ENCODE measurements at regions of chr2 and their contacts with region 1.

Region 1: DNA sequence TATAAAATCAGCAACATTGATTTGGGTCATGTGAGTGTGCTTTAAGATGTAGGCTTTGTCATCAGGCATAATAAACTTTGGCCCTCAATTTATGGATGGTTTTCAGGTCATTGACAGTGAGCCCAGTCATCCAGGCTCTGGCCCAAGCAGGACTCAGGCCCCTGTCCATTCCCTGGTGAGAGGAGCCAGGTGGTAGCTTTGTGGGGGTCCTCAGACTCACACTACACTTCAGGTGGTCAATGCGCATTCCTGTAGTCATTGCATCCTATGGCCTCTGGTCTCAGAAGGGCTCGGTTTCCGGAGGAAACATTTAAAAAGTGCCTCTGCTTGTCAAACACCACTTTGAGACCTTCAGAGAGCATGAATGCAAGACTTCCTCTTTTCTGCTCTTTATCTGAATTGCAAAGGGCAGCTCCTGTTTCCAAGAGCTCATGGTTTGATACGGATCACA is 20.2 kb downstream of the LGALSL start:
- DNase-seq: no peak
- H3K4me3 ChIP-seq: no peak overlapping the region
- CTCF ChIP-seq: no peak
- POLR2A ChIP-seq: no peak

Region 2: GRCh38 chr2:64506686-64507085 is 32.5 kb after region 1 on chr2:
- intact Hi-C with region 1: loop called (anchors 1 kb)
- DNase-seq: no peak
- H3K4me3 ChIP-seq: no peak overlapping the region
- CTCF ChIP-seq: no peak
- POLR2A ChIP-seq: no peak

Measured in lower leg skin (tissue), 4 donors.